Gastrocnemius medialis (tissue), 4 donors: ENCODE measurements at regions of chr3 and their contacts with region 1.

Region 1: DNA sequence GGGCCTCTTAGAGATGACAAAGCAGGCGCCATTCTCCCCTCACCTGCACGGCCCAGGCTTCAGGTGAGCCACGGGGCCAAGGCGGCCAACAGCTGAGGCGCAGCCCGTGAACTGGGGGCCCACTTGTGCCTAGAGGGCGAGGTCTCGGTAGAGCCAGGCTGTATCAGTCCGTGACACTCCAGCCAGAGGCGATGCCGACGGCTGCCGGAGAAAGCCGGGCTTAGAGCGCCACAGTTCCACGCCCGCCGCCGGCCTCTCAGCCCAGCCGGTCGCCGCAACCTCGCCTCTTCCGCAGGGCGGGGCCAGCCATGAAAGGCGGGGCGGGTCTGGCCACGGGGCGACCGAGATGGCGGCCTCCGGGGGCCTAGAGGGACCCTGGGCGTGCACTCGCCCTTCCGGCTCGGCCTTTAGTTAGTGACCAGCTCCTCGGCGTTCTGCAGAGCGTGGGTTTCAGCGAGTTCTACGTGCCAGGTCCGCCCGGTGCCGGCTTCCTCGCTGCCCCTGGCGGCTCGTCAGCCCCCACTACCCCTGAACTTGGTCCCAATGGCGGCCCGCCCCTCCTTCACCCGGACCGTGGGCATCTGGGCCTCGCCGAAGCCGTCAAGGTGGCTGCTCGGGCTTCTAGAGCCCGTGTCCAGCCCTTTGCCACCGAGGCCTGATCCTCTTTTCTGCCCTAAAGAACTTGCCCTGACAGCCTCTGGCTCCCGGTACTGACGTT is at the start of gene ZNF621:
- DNase-seq: peak; percentile 78 to 87
- ATAC-seq: peak; percentile 95 to 96
- H3K4me3 ChIP-seq: peak within 1 kb of the TSS; percentile 67 to 96 (median 70)
- H3K27ac ChIP-seq: peak within 1 kb of the TSS; percentile 87 to 90 (median 88)
- H3K4me1 ChIP-seq: peaks cover 12 to 13% of the 10 kb centered on the region in 2 donors
- H3K27me3 ChIP-seq: no peaks in the 10 kb centered on the region
- CTCF ChIP-seq: peak in 1 of 5 experiments; percentile 11
- POLR2A ChIP-seq: peak; percentile 79 to 90
- total RNA-seq, gene ZNF621: 5.7 to 8.4 (median 7.4) TPM

Region 2: GRCh38 chr3:40309418-40309924 is 215.3 kb before region 1 on chr3 and contains the start of gene EIF1B:
- in situ Hi-C with region 1: no loop called
- intact Hi-C with region 1: loop called (anchors 1 kb)
- DNase-seq: peak; percentile 96 to 98
- ATAC-seq: peak; percentile 95 to 97
- H3K4me3 ChIP-seq: peak within 1 kb of the TSS; percentile 81 to 100 (median 95)
- H3K27ac ChIP-seq: peak within 1 kb of the TSS; percentile 96 to 99 (median 98)
- H3K4me1 ChIP-seq: peaks cover 41 to 49% of the 10 kb centered on the region in 2 donors
- H3K27me3 ChIP-seq: no peaks in the 10 kb centered on the region
- CTCF ChIP-seq: peak; percentile 80 to 95 (median 88)
- POLR2A ChIP-seq: peak; percentile 98
- total RNA-seq, gene EIF1B: 12.9 to 32.7 (median 24.5) TPM

Region 3: GRCh38 chr3:40317061-40317855 is 207.5 kb before region 1 on chr3:
- in situ Hi-C with region 1: loop called in 2 of 4 experiments (anchors 10 kb)
- intact Hi-C with region 1: no loop called
- DNase-seq: no peak
- ATAC-seq: peak; percentile 37 to 49
- H3K4me3 ChIP-seq: no peak overlapping the region
- H3K27ac ChIP-seq: no peak overlapping the region
- H3K4me1 ChIP-seq: peaks cover 21 to 23% of the 10 kb centered on the region in 2 donors
- H3K27me3 ChIP-seq: no peaks in the 10 kb centered on the region
- CTCF ChIP-seq: peak; percentile 68 to 82 (median 75)
- POLR2A ChIP-seq: no peak

Region 4: DNA sequence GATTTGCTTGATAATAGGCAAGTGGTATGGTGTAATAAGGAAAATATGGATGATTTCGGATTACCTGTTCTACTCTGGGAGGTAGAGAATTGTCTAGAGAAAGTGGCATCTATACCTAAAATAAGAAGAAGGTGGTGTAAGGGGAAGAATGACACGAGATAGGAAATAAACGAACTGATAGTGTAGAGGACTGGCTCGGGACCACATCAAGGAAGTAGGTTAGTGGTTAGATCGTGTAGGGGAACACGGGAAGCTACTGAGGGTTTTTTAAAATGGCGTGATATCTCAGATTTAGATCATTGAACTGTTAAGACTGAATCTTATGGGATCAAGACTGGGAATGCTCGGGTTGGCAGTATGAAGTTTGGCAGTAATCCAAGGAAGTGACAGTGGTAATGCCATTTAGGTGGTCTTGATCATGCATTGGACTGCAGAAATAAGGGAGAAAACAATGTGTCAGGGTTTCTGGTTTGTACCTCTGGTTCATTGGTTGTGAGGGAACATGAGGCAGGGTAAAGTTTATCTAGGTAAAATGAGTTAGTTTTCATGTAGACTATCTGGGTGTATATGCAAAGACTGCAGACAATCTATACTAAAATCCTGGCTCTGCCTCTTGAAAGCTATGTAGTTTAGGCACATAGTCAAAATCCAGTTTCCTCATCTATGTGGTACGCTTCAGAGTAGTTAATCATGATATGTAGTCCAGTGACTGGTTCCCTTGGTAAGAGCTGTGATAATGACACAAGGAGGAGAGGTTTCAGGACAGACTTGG is 60.2 kb before region 1 on chr3:
- in situ Hi-C with region 1: loop called in 2 of 4 experiments (anchors 10 kb)
- intact Hi-C with region 1: no loop called
- DNase-seq: no peak
- ATAC-seq: no peak
- H3K4me3 ChIP-seq: no peak overlapping the region
- H3K27ac ChIP-seq: no peak overlapping the region
- H3K4me1 ChIP-seq: no peaks in the 10 kb centered on the region
- H3K27me3 ChIP-seq: no peaks in the 10 kb centered on the region
- CTCF ChIP-seq: no peak
- POLR2A ChIP-seq: no peak

Region 5: DNA sequence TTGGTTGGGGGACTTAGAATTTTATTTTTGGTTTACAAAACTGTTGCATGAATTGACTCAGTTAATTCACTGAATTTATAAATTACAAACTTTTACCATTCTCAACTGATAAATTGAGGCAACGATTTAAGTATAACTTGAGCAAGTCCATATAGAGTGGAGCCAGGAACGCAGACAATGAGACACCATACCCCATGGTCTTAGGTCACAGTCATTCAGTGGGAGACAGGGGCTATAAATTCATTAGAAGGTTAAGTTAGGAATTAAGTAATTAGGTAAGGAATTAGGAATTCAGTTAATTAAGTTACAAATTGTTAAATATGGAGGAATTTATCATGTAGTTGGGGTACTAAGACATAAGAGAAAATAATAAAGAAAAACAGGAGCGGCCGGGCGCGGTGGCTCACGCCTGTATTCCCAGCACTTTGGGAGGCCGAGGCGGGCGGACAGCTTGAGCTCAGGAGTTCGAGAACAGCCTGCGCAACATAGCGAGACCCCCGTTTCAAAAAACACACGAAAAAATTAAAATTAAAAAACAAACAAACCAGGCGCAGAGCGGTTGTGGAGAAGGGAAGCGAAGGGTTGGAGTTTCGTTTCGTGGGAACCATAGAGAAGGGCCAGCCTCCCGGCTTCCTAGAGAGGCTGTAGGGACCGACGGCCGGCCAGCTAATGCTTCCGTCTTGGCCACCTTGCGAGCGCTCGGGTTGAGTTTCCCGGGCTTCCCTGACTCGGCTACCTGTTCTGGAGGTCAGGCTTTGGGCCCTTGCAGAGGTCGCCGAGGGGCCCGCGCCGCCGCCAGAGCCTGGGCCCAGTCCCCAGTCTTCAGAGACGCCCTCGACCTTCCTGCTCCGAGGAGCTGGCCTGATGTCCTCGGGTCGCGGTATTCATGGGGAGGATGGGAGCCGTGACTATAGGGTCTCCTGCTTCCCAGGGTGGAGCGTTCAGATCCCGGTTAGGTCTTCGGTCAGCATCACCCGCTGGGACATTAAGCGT is 48.0 kb before region 1 on chr3 and contains the start of gene ZNF619:
- in situ Hi-C with region 1: no loop called
- intact Hi-C with region 1: loop called (anchors 2 kb)
- DNase-seq: peak; percentile 52 to 76
- ATAC-seq: peak; percentile 91 to 95
- H3K4me3 ChIP-seq: peak within 1 kb of the TSS; percentile 72 to 98 (median 88)
- H3K27ac ChIP-seq: peak within 1 kb of the TSS; percentile 77 to 90 (median 80)
- H3K4me1 ChIP-seq: peaks cover 4 to 6% of the 10 kb centered on the region in 2 donors
- H3K27me3 ChIP-seq: no peaks in the 10 kb centered on the region
- CTCF ChIP-seq: no peak
- POLR2A ChIP-seq: peak in 1 of 2 donors; percentile 17
- total RNA-seq, gene ZNF619: 1.9 to 7.2 (median 2.7) TPM

Region 6: GRCh38 chr3:40505599-40506462 is 18.9 kb before region 1 on chr3 and contains the start of gene ZNF620:
- in situ Hi-C with region 1: no loop called
- intact Hi-C with region 1: loop called (anchors 1 kb)
- DNase-seq: peak; percentile 41 to 78
- ATAC-seq: peak; percentile 65 to 91
- H3K4me3 ChIP-seq: peak within 1 kb of the TSS; percentile 64 to 76 (median 70)
- H3K27ac ChIP-seq: peak within 1 kb of the TSS; percentile 77 to 86 (median 82)
- H3K4me1 ChIP-seq: peaks cover 10 to 13% of the 10 kb centered on the region in 2 donors
- H3K27me3 ChIP-seq: no peaks in the 10 kb centered on the region
- CTCF ChIP-seq: peak in 2 of 5 experiments; percentile 21 to 45
- POLR2A ChIP-seq: peak; percentile 32 to 48
- total RNA-seq, gene ZNF620: 0.33 to 4.2 (median 1.9) TPM

Region 7: GRCh38 chr3:40770061-40770460 is 245.3 kb after region 1 on chr3:
- in situ Hi-C with region 1: no loop called
- intact Hi-C with region 1: no loop called
- DNase-seq: peak in 1 of 2 donors; percentile 16
- ATAC-seq: no peak
- H3K4me3 ChIP-seq: no peak overlapping the region
- H3K27ac ChIP-seq: peak overlapping the region in 3 of 4 donors; percentile 20 to 54 (median 40)
- H3K4me1 ChIP-seq: peaks cover 7 to 12% of the 10 kb centered on the region in 2 donors
- H3K27me3 ChIP-seq: no peaks in the 10 kb centered on the region
- CTCF ChIP-seq: no peak
- POLR2A ChIP-seq: no peak

Region 8: DNA sequence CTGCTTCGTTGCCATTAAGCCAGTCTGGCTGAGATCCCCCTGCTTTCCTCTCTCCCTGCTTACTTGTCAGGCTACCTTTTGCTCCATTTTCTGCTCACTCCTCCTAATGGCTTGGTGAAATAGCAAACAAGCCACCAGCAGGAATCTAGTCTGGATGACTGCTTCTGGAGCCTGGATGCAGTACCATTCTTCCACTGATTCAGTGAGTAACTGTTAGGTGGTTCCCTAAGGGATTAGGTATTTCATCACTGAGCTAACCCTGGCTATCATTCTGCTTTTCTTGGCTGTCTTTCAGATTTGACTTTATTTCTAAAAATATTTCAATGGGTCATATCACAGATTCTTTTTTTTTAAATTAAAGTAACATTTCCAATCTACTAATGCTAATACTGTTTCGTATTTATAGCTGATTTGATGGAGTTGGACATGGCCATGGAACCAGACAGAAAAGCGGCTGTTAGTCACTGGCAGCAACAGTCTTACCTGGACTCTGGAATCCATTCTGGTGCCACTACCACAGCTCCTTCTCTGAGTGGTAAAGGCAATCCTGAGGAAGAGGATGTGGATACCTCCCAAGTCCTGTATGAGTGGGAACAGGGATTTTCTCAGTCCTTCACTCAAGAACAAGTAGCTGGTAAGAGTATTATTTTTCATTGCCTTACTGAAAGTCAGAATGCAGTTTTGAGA is 699.5 kb after region 1 on chr3:
- in situ Hi-C with region 1: no loop called
- intact Hi-C with region 1: loop called (anchors 5 kb)
- DNase-seq: peak in 1 of 2 donors; percentile 20
- ATAC-seq: peak; percentile 97 to 98
- H3K4me3 ChIP-seq: no peak overlapping the region
- H3K27ac ChIP-seq: peak overlapping the region; percentile 36 to 50 (median 47)
- H3K4me1 ChIP-seq: peaks cover 46 to 64% of the 10 kb centered on the region in 2 donors
- H3K27me3 ChIP-seq: no peaks in the 10 kb centered on the region
- CTCF ChIP-seq: peak in 1 of 5 experiments; percentile 20
- POLR2A ChIP-seq: no peak